ENCODE measurements at regions of chr22 and their contacts with region 1.

Region 1: GRCh38 chr22:31139866-31140716 is at the start of gene PLA2G3:
- DNase-seq: peak; percentile 41 to 71 (median 68)
- ATAC-seq: peak; percentile 82
- H3K4me3 ChIP-seq: no peak within 1 kb of the TSS; the same call in 1 of the 2 replicates
- H3K27ac ChIP-seq: no peak within 1 kb of the TSS
- H3K4me1 ChIP-seq: peaks cover 0 to 13% of the 10 kb centered on the region in 2 experiments; a peak in 3 of 5 replicates
- H3K27me3 ChIP-seq: no peaks in the 10 kb centered on the region; a peak in 1 of 5 replicates
- CTCF ChIP-seq: 0 out of 6 replicates have a peak, but pooled peaks of 1 of the 3 experiments have one; percentile 16
- EP300 ChIP-seq: no peak
- POLR2A ChIP-seq: no peak
- RAD21 ChIP-seq: no peak
- polyA plus RNA-seq, gene PLA2G3: 0.18 to 0.20 TPM

Region 2: GRCh38 chr22:31055635-31056159 is 84.4 kb before region 1 on chr22:
- CTCF ChIA-PET with region 1: no interaction called
- POLR2A ChIA-PET with region 1: no interaction called
- in situ Hi-C with region 1: no loop called
- intact Hi-C with region 1: no loop called
- DNase-seq: no peak
- ATAC-seq: no peak
- H3K4me3 ChIP-seq: no peak overlapping the region
- H3K27ac ChIP-seq: no peak overlapping the region
- H3K4me1 ChIP-seq: peaks cover 10 to 11% of the 10 kb centered on the region in 2 experiments; a peak in 3 of 5 replicates
- H3K27me3 ChIP-seq: no peaks in the 10 kb centered on the region
- CTCF ChIP-seq: no peak
- EP300 ChIP-seq: no peak
- POLR2A ChIP-seq: no peak
- RAD21 ChIP-seq: no peak

Region 3: DNA sequence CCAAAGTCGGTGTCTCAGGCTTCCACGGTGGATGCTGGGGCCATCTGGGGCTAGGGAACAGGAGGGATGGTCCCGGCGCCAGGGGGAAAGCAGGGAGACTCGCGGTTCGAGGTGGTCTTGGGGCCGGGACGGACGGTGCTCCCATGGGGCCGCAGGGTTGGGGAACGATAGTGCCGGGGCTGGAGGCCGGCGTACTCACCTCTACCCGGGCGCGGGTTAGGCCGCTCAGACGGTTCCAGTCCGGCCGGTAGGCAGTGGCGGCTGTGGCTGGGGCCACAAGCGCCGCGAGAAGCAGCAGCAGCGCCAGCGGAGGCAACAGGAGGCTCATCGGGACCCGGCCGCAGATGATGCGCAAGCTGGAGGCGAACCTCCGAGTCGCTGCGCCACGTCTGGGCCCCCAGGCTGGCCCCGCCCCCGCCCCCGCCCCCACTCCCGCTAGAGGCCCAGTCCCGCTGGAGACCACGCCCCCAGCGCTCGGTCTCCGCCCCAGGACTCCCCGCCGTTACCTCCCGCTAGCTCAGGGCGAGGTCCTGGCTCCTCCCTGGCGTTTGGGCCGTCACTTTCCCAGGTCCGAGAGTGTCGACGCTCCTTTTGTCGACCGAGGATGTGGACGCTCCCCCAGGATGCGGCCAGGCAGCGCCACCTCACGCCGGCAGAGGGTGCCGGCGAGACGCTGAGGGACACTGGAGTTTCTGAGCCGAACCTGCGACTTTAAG is 32.8 kb before region 1 on chr22 and contains the start of gene SELENOM:
- CTCF ChIA-PET with region 1: no interaction called
- POLR2A ChIA-PET with region 1: no interaction called
- in situ Hi-C with region 1: loop called (anchors 5 kb)
- intact Hi-C with region 1: no loop called
- DNase-seq: peak; percentile 93 to 96 (median 94)
- ATAC-seq: peak; percentile 100
- H3K4me3 ChIP-seq: peak within 1 kb of the TSS; percentile 52
- H3K27ac ChIP-seq: peak within 1 kb of the TSS; percentile 68
- H3K4me1 ChIP-seq: peaks cover 2 to 17% of the 10 kb centered on the region in 2 experiments; a peak in 4 of 5 replicates
- H3K27me3 ChIP-seq: no peaks in the 10 kb centered on the region
- CTCF ChIP-seq: peak; percentile 90 to 92 (median 90)
- EP300 ChIP-seq: no peak
- POLR2A ChIP-seq: no peak
- RAD21 ChIP-seq: peak; percentile 88 to 89
- polyA plus RNA-seq, gene SELENOM: 1.2 to 2.9 TPM

Region 4: GRCh38 chr22:31173386-31174145 is 33.5 kb after region 1 on chr22:
- CTCF ChIA-PET with region 1: no interaction called
- POLR2A ChIA-PET with region 1: no interaction called
- in situ Hi-C with region 1: no loop called
- intact Hi-C with region 1: no loop called
- DNase-seq: no peak
- ATAC-seq: no peak
- H3K4me3 ChIP-seq: no peak overlapping the region
- H3K27ac ChIP-seq: no peak overlapping the region
- H3K4me1 ChIP-seq: no peaks in the 10 kb centered on the region; a peak in 1 of 5 replicates
- H3K27me3 ChIP-seq: no peaks in the 10 kb centered on the region
- CTCF ChIP-seq: no peak
- EP300 ChIP-seq: no peak
- POLR2A ChIP-seq: no peak
- RAD21 ChIP-seq: no peak

Measured in K562 (cell line).